ENCODE measurements at regions of chr3 and their contacts with region 1.

Region 1: GRCh38 chr3:13091898-13092611 is 18.8 kb upstream of the IQSEC1 start:
- DNase-seq: peak; percentile 66 to 84 (median 70)
- H3K4me3 ChIP-seq: no peak overlapping the region
- H3K4me3 Mint-ChIP-seq: no peak overlapping the region
- H3K27ac ChIP-seq: no peak overlapping the region
- H3K27ac Mint-ChIP-seq: peak overlapping the region in 1 of 8 donors; percentile 38
- H3K4me1 ChIP-seq: no peaks in the 10 kb centered on the region
- H3K4me1 Mint-ChIP-seq: peaks cover 5 to 7% (median 7%) of the 10 kb centered on the region in 3 donors
- H3K27me3 ChIP-seq: no peaks in the 10 kb centered on the region
- H3K27me3 Mint-ChIP-seq: peaks cover 4% of the 10 kb centered on the region in 2 donors

Region 2: DNA sequence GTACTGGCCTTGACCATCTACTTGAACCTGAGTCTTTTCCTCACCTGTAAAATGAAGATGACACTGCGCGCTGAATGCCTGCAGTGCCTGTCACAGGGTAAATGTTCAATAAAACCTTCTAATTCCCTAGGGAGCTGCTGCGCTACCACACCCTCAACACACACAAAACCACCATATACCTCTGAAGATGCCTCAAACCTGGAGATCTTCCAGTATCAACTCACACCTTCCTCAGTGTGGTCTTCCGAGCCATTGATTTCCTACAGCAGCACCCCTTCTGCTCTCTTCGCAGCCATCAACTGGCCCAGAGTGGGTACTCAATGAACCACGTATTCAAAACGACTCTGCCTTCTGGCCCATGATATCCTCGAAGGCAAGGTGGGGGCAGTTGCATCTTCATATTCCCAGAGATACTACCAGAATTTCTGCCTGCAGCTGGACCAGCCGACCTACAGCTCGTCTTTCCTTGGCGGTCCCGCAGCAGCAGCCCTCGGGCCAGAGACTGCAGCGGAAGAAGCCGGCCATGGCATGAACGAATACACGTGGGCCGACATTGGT is 251.4 kb before region 1 on chr3:
- CTCF ChIA-PET with region 1: no interaction called
- POLR2A ChIA-PET with region 1: no interaction called
- DNase-seq: peak in 3 of 5 donors; percentile 34 to 63 (median 36)
- H3K4me3 ChIP-seq: peak overlapping the region; percentile 69
- H3K4me3 Mint-ChIP-seq: peak overlapping the region; percentile 94 to 98 (median 97)
- H3K27ac ChIP-seq: peak overlapping the region; percentile 99
- H3K27ac Mint-ChIP-seq: peak overlapping the region; percentile 98 to 100 (median 100)
- H3K4me1 ChIP-seq: peaks cover 43% of the 10 kb centered on the region
- H3K4me1 Mint-ChIP-seq: peaks cover 36 to 54% (median 50%) of the 10 kb centered on the region in 3 donors
- H3K27me3 ChIP-seq: no peaks in the 10 kb centered on the region
- H3K27me3 Mint-ChIP-seq: peaks cover 0 to 1% of the 10 kb centered on the region in 2 donors

Region 3: DNA sequence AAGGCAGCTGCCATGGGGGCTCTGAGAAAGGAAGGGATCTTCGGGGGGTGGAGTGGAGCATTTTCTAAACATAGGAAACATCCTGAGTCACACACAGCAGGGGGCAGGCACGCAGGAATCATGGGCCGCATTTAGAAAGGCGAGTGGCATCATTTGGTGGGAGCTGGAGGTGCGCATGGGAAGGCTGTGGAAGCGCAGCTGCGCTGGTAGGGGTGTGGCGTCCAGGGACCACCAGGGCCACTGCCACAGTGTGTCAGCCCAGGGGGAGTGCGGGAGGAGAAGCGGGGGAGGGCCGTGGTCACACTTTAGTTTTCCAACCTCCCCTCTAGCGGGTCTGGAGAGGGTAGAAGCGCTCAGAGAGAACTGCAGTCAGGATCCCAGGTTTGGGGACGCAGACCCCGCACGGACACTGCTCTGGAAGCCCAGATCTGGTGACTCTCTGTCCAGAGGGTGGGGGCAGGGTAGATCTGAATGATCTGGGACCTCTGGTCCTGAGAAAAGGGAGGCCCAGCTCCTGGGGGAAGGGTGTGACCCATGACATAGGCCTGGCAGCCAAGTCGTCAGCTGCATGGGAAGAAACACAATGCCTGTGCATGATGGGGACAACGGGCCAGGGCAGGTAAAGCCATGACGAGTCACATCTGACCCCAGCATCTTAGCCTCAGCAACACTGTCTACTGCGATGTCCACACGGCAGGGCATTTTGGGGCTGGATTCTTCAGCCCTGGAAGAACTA is 69.1 kb after region 1 on chr3:
- CTCF ChIA-PET with region 1: no interaction called
- POLR2A ChIA-PET with region 1: no interaction called
- DNase-seq: no peak
- H3K4me3 ChIP-seq: no peak overlapping the region
- H3K4me3 Mint-ChIP-seq: no peak overlapping the region
- H3K27ac ChIP-seq: no peak overlapping the region
- H3K27ac Mint-ChIP-seq: no peak overlapping the region
- H3K4me1 ChIP-seq: no peaks in the 10 kb centered on the region
- H3K4me1 Mint-ChIP-seq: no peaks in the 10 kb centered on the region
- H3K27me3 ChIP-seq: no peaks in the 10 kb centered on the region
- H3K27me3 Mint-ChIP-seq: peaks cover 3 to 14% of the 10 kb centered on the region in 2 donors

Region 4: GRCh38 chr3:13419505-13420044 is 327.5 kb after region 1 on chr3:
- CTCF ChIA-PET with region 1: interaction called, 13 read pairs
- POLR2A ChIA-PET with region 1: no interaction called
- DNase-seq: peak; percentile 35 to 72 (median 56)
- H3K4me3 ChIP-seq: peak overlapping the region; percentile 94
- H3K4me3 Mint-ChIP-seq: peak overlapping the region; percentile 76 to 97 (median 94)
- H3K27ac ChIP-seq: peak overlapping the region; percentile 79
- H3K27ac Mint-ChIP-seq: peak overlapping the region; percentile 85 to 99 (median 97)
- H3K4me1 ChIP-seq: peaks cover 62% of the 10 kb centered on the region
- H3K4me1 Mint-ChIP-seq: peaks cover 57 to 66% (median 64%) of the 10 kb centered on the region in 3 donors
- H3K27me3 ChIP-seq: no peaks in the 10 kb centered on the region
- H3K27me3 Mint-ChIP-seq: peaks cover 0 to 4% of the 10 kb centered on the region in 2 donors

Measured in CD8-positive, alpha-beta memory T cell (primary cell).